H1 (cell line): ENCODE measurements at regions of chr20 and their contacts with region 1.

Region 1: DNA sequence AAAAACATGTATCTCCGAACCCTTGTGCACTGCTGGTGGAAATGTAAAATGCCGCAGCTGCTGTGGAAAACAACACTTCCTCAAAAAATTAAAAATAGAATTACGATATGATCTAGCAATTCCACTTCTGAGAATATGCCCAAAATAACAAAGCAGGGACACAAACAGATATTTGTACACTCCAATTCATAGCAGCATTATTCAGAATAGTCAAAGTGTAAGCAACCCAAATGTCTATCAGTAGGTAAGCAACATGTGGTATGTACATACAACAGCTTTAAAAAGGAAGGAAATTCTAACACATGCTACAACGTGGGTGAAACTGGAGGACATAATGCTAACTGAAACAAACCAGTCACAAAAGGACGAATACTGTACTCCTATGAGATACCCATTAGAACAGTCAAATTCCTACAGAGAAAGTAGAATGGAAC is 5.7 kb upstream of the RAB5IF start:
- DNase-seq: no peak
- H3K4me3 ChIP-seq: no peak overlapping the region
- H3K27ac ChIP-seq: no peak overlapping the region
- H3K4me1 ChIP-seq: peaks cover 0 to 11% (median 9%) of the 10 kb centered on the region in 4 experiments; a peak in 6 of 7 replicates
- H3K27me3 ChIP-seq: no peaks in the 10 kb centered on the region; a peak in 1 of 7 replicates
- CTCF ChIP-seq: no peak
- EP300 ChIP-seq: no peak
- POLR2A ChIP-seq: no peak
- RAD21 ChIP-seq: no peak

Region 2: DNA sequence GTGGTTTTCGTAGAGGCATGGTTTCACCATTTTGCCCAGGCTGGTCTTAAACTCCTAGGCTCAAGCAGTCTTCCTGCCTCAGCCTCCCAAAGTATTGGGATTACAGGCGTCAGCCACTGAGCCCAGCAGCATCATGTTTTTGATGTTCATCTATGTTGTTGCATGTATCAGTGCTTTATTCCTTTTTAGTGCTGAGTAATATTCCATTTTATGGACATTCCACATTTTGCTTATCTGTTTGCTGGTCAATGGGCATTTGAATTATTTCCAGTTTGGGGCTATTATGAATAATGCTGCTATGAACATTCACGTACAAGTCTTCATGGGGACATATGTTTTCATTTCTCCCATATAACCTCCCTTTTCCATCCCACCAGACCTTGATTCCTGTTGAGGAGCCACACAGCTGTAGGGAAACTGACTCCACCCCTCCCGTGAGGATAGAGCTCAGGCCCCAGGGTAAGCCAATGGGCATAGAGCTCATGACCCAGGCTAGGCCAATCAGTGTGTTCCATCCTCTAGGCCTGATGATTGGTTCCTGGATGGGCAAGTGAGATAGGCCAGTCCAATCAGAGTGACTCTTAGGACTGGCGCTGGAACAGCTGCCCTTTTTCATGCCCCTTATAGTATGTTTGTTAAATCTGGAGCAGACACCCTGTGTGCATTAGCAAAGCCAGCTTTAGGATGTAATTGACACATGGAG is 244.3 kb before region 1 on chr20:
- CTCF ChIA-PET with region 1: no interaction called
- POLR2A ChIA-PET with region 1: no interaction called
- DNase-seq: no peak
- H3K4me3 ChIP-seq: no peak overlapping the region
- H3K27ac ChIP-seq: no peak overlapping the region
- H3K4me1 ChIP-seq: peaks cover 0 to 7% (median 2%) of the 10 kb centered on the region in 4 experiments; a peak in 4 of 7 replicates
- H3K27me3 ChIP-seq: no peaks in the 10 kb centered on the region
- CTCF ChIP-seq: no peak
- EP300 ChIP-seq: no peak
- POLR2A ChIP-seq: no peak
- RAD21 ChIP-seq: no peak

Region 3: GRCh38 chr20:36585463-36586108 is 14.3 kb before region 1 on chr20:
- CTCF ChIA-PET with region 1: interaction called, 202 read pairs
- POLR2A ChIA-PET with region 1: interaction called, 388 read pairs
- DNase-seq: peak; percentile 68 to 80
- H3K4me3 ChIP-seq: peak overlapping the region in 2 of 4 experiments; percentile 29 to 42; a peak in 4 of 8 replicates
- H3K27ac ChIP-seq: peak overlapping the region; percentile 67
- H3K4me1 ChIP-seq: peaks cover 3 to 17% (median 11%) of the 10 kb centered on the region in 4 experiments; a peak in 6 of 7 replicates
- H3K27me3 ChIP-seq: no peaks in the 10 kb centered on the region
- CTCF ChIP-seq: no peak
- EP300 ChIP-seq: peak in 1 of 2 experiments; percentile 32; a peak in 1 of 3 replicates
- POLR2A ChIP-seq: peak in 1 of 2 experiments; percentile 17; a peak in 1 of 3 replicates
- RAD21 ChIP-seq: no peak; a peak in 2 of 4 replicates